IMR-90 (cell line): ENCODE measurements at regions of chr13 and their contacts with region 1.

Region 1: GRCh38 chr13:27744801-27745200 is 47.5 kb upstream of the GSX1 start:
- DNase-seq: no peak
- ATAC-seq: no peak
- H3K4me3 ChIP-seq: no peak overlapping the region
- H3K27ac ChIP-seq: no peak overlapping the region
- H3K4me1 ChIP-seq: no peaks in the 10 kb centered on the region
- H3K27me3 ChIP-seq: peaks cover 2% of the 10 kb centered on the region
- CTCF ChIP-seq: no peak
- POLR2A ChIP-seq: no peak
- RAD21 ChIP-seq: no peak

Region 2: DNA sequence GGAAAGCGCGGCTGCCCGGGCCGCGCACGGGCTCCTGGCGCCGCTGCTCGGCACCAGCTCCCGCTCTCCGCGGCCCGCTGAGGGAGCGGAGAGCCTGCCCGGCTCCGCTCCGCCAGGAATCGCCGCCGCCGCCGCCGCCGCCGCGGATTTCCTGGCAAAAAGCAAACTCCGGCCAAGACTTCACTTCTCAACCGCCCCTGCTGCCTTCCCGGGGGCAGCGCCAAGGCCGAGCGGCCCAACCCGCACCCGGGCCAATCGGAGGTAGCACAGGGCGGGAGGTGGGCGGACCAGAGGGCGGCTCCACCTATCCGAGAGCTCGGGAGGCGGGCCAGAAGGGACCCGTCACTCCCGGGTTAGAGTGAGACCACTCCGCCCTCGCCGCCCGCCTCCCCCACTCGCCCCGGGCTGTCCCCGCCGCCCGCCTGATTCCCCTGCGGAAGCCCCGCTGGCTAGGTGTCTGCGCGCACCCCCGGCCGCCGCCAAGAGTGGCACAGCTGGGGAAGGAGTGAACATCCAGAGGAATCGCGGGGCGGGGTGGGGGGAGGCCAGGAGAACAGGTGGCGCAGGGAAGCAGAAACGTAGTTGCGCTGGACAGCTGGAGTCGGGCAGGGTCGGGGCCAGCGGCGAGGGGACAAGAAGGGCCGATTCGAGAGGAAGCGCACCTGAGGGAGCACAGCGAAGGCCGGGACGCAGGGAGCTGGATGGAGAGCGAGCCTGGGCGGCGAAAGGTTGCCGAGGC is 124.3 kb before region 1 on chr13 and contains the start of gene LNX2:
- CTCF ChIA-PET with region 1: no interaction called
- POLR2A ChIA-PET with region 1: no interaction called
- dilution Hi-C with region 1: no loop called
- in situ Hi-C with region 1: no loop called
- intact Hi-C with region 1: no loop called
- DNase-seq: peak; percentile 95
- ATAC-seq: peak; percentile 96
- H3K4me3 ChIP-seq: peak within 1 kb of the TSS; percentile 99
- H3K27ac ChIP-seq: peak within 1 kb of the TSS; percentile 61
- H3K4me1 ChIP-seq: no peaks in the 10 kb centered on the region
- H3K27me3 ChIP-seq: no peaks in the 10 kb centered on the region
- CTCF ChIP-seq: no peak
- POLR2A ChIP-seq: no peak
- RAD21 ChIP-seq: no peak
- total RNA-seq, gene LNX2: 7.2 and 7.8 TPM in 2 replicates

Region 3: DNA sequence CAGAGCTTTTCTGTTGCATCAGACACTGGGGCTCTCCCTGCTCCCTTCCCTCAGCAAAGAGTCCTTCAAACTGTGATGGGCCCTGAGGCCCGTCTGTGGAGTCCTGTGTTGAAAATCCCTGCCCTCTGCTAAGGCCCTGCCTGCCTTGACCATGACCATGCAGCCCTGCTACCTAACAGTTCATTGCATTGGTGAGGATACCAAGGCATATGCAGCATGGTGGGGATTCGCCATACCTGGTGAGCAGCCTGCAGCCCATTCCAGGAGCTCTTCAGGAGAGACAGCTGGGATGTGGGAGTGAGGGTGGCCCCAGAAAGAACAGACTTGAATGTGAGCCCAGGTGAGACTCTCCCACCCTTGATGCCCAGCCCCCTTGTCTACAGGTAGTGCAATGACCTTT is 23.1 kb before region 1 on chr13:
- CTCF ChIA-PET with region 1: no interaction called
- POLR2A ChIA-PET with region 1: no interaction called
- dilution Hi-C with region 1: no loop called
- in situ Hi-C with region 1: no loop called
- intact Hi-C with region 1: loop called (anchors 1 kb)
- DNase-seq: no peak
- ATAC-seq: no peak
- H3K4me3 ChIP-seq: no peak overlapping the region
- H3K27ac ChIP-seq: no peak overlapping the region
- H3K4me1 ChIP-seq: no peaks in the 10 kb centered on the region
- H3K27me3 ChIP-seq: peaks cover 9% of the 10 kb centered on the region
- CTCF ChIP-seq: no peak
- POLR2A ChIP-seq: no peak
- RAD21 ChIP-seq: no peak

Region 4: DNA sequence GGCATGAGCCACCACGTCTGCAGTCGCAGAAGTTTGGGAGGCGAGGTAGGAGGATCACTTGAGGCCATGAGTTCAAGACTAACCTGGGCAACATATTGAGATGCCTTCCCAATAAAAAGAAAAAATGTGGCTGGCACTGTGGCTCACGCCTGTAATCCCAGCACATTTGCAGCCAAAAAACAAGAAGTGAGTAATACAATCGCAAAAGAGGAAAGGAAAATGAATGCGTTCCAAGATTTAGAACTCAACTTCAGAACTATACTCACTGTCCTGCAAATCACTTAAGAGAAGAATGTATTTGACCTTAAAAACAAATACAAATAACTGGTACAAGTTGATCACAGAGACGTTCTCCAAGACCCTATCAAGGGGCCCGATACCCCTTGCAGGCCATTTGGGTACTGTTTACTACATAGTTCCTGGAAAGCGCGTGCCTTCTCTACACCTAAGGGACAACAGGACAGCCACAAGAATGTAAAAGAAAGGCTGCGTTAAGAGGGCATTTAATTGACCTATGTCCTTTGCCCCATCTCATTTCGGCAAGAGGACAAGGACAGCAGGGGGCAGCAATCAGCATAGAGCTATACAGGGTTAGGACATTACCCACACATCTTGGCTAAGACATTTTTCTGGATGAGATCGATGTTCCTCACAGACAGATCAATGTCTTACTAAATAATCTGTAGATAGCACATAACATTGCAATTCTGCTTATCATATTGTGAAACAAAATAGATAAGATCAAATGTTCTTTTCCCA is 314.2 kb after region 1 on chr13:
- CTCF ChIA-PET with region 1: no interaction called
- POLR2A ChIA-PET with region 1: no interaction called
- dilution Hi-C with region 1: no loop called
- in situ Hi-C with region 1: no loop called
- intact Hi-C with region 1: no loop called
- DNase-seq: peak; percentile 15
- ATAC-seq: 0 out of 2 replicates have a peak, but pooled peaks have one; percentile 29
- H3K4me3 ChIP-seq: no peak overlapping the region
- H3K27ac ChIP-seq: no peak overlapping the region
- H3K4me1 ChIP-seq: no peaks in the 10 kb centered on the region
- H3K27me3 ChIP-seq: peaks cover 13% of the 10 kb centered on the region
- CTCF ChIP-seq: peak; percentile 32
- POLR2A ChIP-seq: no peak
- RAD21 ChIP-seq: peak; percentile 29; the same call in 1 of the 2 replicates